Tibial artery (tissue), 4 donors: ENCODE measurements at regions of chr10 and their contacts with region 1.

Region 1: DNA sequence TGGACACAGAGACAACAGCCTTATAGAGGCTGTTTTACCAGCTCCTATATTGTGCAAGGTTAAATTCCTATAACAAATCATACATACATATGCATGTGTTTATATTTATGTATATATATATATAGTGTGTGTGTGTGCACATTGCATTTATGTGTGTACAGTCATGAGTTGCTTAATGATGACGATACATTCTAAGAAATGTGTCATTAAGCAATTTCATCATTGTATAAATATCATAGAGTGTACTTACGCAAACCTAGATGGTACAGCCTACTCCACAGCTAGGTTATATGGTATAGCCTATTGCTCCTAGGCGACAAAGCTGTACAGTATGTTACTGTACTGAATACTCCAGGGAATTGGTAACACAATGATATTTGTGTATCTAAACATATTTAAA is 30.1 kb upstream of the TNKS2 start:
- DNase-seq: no peak
- H3K4me3 ChIP-seq: no peak overlapping the region
- H3K27ac ChIP-seq: no peak overlapping the region
- H3K4me1 ChIP-seq: no peaks in the 10 kb centered on the region
- H3K27me3 ChIP-seq: no peaks in the 10 kb centered on the region
- CTCF ChIP-seq: no peak

Region 2: GRCh38 chr10:91908337-91909116 is 140.4 kb after region 1 on chr10:
- intact Hi-C with region 1: loop called (anchors 10 kb)
- DNase-seq: peak; percentile 72 to 85
- H3K4me3 ChIP-seq: peak overlapping the region; percentile 72 to 84
- H3K27ac ChIP-seq: peak overlapping the region; percentile 76 to 80
- H3K4me1 ChIP-seq: peaks cover 0 to 21% (median 8%) of the 10 kb centered on the region in 4 donors
- H3K27me3 ChIP-seq: no peaks in the 10 kb centered on the region
- CTCF ChIP-seq: peak in 1 of 2 experiments; percentile 41